AG04450 (cell line): ENCODE measurements at regions of chr10 and their contacts with region 1.

Region 1: DNA sequence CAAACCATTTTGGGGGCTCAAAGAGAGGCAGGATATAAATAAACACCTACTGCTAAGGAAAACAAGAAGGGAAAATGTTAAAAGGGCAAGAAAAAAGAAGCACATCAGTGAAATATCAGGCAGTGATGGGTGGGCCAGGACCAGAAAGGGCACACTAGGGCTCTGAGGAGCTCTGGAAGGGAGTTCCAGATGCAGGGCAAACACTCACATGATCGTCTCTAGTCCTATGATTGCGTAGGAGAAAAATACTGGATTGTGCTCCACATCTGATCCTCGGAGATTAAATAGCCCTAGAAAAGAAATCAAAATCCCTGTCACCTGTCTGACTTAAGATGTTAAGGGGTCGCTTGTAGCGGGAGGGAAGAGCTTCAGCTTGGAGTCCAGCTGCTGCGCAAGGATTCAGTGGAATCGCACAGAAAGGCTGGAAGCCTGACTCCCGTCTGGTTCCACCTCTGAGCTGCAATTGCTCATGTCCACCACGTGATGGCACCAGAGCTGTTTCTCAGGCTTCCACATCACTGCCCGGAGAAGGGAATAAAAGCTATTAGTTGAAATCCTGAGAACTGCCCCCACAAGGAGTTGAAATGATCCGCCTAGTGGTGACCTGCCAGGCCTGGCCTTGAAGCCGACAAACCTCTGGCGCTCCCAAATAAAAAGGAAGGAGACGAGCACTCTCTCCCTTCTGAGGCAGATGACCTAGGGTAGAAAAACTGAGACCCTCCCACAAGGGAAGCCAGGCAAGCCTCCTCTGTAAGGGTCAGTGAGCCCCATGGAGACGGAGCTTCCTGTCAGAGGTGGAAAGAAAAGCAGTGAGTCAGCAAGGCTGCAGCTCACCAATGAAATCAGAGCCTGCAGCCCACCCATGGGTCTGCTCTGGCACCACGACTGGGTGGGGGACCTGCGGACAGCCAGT is 39.2 kb downstream of the XPNPEP1 start:
- DNase-seq: peak; percentile 77
- H3K4me3 ChIP-seq: no peak overlapping the region
- H3K27ac ChIP-seq: peak overlapping the region; percentile 63
- H3K27me3 ChIP-seq: no peaks in the 10 kb centered on the region
- CTCF ChIP-seq: peak; percentile 97

Region 2: GRCh38 chr10:109902934-109903589 is 18.9 kb after region 1 on chr10:
- CTCF ChIA-PET with region 1: interaction called, 43 read pairs
- POLR2A ChIA-PET with region 1: no interaction called
- DNase-seq: no peak
- H3K4me3 ChIP-seq: no peak overlapping the region
- H3K27ac ChIP-seq: no peak overlapping the region
- H3K27me3 ChIP-seq: no peaks in the 10 kb centered on the region
- CTCF ChIP-seq: no peak

Region 3: DNA sequence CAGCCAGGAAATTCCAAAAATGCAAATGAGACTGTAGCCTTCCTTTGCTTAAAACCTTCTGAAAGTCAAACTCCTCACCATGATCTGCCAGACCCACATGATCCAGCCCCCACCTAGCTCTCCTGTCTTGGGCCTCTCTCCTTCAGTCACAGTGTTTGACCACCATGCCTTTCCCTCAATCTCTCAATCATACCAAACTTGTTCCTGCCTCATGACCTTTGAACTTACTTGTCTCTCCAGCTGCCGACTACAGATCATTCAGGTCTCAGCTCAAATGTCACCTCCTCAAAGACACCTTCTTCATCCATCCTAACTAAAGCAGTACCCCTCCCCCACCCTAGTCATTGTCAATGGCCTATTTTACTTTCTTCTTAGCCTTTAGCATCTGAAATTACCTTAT is 114.4 kb after region 1 on chr10:
- CTCF ChIA-PET with region 1: interaction called, 13 read pairs
- POLR2A ChIA-PET with region 1: no interaction called
- DNase-seq: no peak
- H3K4me3 ChIP-seq: no peak overlapping the region
- H3K27ac ChIP-seq: no peak overlapping the region
- H3K27me3 ChIP-seq: no peaks in the 10 kb centered on the region
- CTCF ChIP-seq: no peak

Region 4: GRCh38 chr10:110042891-110043290 is 158.8 kb after region 1 on chr10:
- CTCF ChIA-PET with region 1: interaction called, 11 read pairs
- POLR2A ChIA-PET with region 1: no interaction called
- DNase-seq: no peak
- H3K4me3 ChIP-seq: no peak overlapping the region
- H3K27ac ChIP-seq: no peak overlapping the region
- H3K27me3 ChIP-seq: no peaks in the 10 kb centered on the region
- CTCF ChIP-seq: no peak

Region 5: GRCh38 chr10:110076559-110077318 is 192.6 kb after region 1 on chr10:
- CTCF ChIA-PET with region 1: interaction called, 24 read pairs
- POLR2A ChIA-PET with region 1: interaction called, 3 read pairs
- DNase-seq: no peak
- H3K4me3 ChIP-seq: no peak overlapping the region
- H3K27ac ChIP-seq: no peak overlapping the region
- H3K27me3 ChIP-seq: no peaks in the 10 kb centered on the region
- CTCF ChIP-seq: no peak

Region 6: DNA sequence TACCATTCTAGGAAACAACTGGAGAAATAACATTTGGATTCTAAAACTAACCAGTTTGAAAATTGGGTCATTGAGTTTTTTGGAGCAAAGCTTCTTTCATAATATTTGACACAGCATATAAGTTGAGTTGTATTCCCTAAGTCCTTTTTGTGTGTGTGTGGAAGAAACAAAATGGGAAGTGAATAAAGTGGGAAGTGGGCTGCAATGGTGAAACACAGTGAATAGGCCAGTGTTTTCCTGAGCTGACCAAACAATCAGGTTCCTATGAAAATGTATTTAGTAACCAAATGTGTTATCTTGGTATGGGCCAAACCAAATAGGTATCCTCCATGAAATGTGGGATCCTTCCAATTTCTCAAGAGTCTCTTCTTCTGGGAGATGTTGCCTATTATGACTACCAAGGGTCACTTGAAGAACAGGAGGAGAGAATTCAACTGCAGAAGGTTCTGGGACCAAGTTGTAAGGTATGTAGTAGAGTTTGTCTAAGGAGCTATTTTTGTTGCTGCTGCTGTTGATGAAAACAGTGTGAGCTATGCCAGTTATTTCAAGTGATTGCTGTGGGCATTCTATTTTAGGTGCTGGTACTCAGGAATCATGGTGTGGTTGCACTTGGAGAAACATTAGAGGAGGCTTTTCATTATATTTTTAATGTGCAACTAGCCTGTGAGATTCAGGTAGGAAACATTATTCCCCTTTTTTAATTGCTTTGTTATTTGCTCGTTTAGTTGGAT is 234.9 kb after region 1 on chr10:
- CTCF ChIA-PET with region 1: interaction called, 25 read pairs
- POLR2A ChIA-PET with region 1: no interaction called
- DNase-seq: no peak
- H3K4me3 ChIP-seq: no peak overlapping the region
- H3K27ac ChIP-seq: no peak overlapping the region
- H3K27me3 ChIP-seq: no peaks in the 10 kb centered on the region
- CTCF ChIP-seq: no peak